Heart right ventricle (tissue), 16 donors: ENCODE measurements at regions of chr20 and their contacts with region 1.

Region 1: GRCh38 chr20:2865630-2866029 is 7.7 kb upstream of the PTPRA start:
- DNase-seq: no peak
- ATAC-seq: no peak
- H3K4me3 ChIP-seq: no peak overlapping the region
- H3K27ac ChIP-seq: no peak overlapping the region
- H3K4me1 ChIP-seq: peaks cover 0 to 24% (median 2%) of the 10 kb centered on the region in 9 donors
- H3K27me3 ChIP-seq: no peaks in the 10 kb centered on the region
- CTCF ChIP-seq: no peak

Region 2: GRCh38 chr20:2991532-2991931 is 125.9 kb after region 1 on chr20:
- intact Hi-C with region 1: loop called in 2 of 10 experiments (anchors 10 kb)
- DNase-seq: no peak
- ATAC-seq: no peak
- H3K4me3 ChIP-seq: no peak overlapping the region
- H3K27ac ChIP-seq: no peak overlapping the region
- H3K4me1 ChIP-seq: peaks cover 0 to 18% (median 0%) of the 10 kb centered on the region in 9 donors
- H3K27me3 ChIP-seq: no peaks in the 10 kb centered on the region
- CTCF ChIP-seq: no peak

Region 3: DNA sequence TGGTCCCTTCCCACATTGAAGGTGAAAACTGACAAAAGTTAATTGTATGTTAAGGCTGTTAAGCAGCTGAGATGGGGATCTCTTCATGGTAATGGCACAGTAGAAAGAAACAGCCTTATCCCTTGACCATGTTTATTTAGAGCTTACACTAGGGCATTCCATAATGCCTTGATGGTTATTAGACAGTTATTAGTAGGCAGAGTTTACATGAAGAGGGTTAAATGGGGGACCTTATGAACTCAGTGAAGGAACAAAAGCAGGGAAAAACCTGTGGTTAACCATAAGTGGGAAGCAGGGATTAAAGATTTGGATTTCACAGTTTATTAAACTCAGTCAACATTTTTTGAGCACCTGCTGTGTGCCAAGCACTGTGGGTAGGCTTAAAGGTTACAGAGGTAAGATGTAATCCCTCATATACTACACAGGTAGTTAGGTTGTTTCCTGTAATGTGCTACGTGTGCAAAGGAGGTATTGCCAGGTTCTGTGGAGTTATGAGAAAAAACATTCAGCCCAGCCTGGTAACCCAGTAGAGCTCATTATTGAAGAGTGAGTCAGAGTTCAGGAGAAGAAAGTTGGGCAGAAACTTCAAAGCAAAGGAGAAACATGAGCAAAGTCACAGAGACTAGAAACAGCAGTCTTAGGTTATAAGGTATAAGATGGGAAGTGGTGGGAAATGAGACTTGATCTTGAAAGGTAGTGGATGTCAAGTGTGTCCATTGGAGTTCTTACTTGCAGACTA is 145.5 kb after region 1 on chr20:
- intact Hi-C with region 1: loop called in 2 of 10 experiments (anchors 10 kb)
- DNase-seq: no peak
- ATAC-seq: no peak
- H3K4me3 ChIP-seq: no peak overlapping the region
- H3K27ac ChIP-seq: no peak overlapping the region
- H3K4me1 ChIP-seq: no peaks in the 10 kb centered on the region
- H3K27me3 ChIP-seq: no peaks in the 10 kb centered on the region
- CTCF ChIP-seq: no peak